ENCODE measurements at regions of chr3 and their contacts with region 1.

Region 1: DNA sequence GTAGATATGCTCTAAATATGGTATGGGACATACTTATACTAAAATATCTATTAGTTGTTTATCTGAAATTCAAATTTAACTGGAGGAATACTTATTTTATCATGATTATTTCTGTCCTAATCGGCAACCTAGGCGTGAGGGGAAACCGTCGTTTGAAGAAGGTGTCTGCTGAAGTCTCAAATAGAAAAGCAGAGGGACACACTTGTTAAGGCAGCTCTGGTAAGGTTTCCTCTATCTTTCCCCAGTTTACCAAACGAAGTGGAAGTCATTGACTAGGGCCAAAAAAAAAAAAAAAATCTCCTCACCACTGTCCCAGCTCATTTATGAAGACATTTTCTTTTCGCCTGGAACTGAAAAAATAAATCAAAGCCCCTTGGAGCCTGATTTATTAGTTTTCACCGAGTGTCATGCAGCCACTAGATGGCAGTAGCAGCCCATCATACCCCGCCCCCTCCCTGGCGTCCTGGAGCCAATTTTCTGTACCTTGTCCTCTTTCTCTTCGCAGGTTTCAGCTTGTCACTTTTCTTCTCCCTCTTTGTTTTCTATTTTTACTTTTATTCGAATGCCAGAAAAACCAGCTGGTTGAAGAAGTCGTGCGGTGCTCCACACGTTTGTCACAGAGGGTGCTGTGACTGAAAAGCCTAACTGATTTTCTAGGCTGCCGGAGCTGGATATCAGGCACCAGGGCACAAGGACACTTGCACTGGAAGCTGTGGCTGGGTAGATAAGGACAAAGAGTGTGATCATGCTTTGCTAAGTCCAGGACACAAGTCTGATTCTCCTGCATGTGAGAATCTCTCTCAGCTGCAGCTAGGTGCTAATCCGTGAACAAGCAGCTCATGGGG is 238.7 kb downstream of the ZPLD1 start:
- DNase-seq: peak; percentile 19
- ATAC-seq: no peak
- H3K4me3 Mint-ChIP-seq: no peak overlapping the region
- H3K27ac Mint-ChIP-seq: no peak overlapping the region
- H3K4me1 Mint-ChIP-seq: peaks cover 3% of the 10 kb centered on the region
- H3K27me3 Mint-ChIP-seq: peaks cover 12% of the 10 kb centered on the region
- CTCF ChIP-seq: peak; percentile 70

Region 2: GRCh38 chr3:101809178-101810021 is 864.1 kb before region 1 on chr3:
- CTCF ChIA-PET with region 1: no interaction called
- POLR2A ChIA-PET with region 1: no interaction called
- intact Hi-C with region 1: loop called (anchors 1 kb)
- DNase-seq: no peak
- ATAC-seq: peak; percentile 82
- H3K4me3 Mint-ChIP-seq: no peak overlapping the region
- H3K27ac Mint-ChIP-seq: no peak overlapping the region
- H3K4me1 Mint-ChIP-seq: peaks cover 37% of the 10 kb centered on the region
- H3K27me3 Mint-ChIP-seq: no peaks in the 10 kb centered on the region
- CTCF ChIP-seq: peak; percentile 59

Region 3: DNA sequence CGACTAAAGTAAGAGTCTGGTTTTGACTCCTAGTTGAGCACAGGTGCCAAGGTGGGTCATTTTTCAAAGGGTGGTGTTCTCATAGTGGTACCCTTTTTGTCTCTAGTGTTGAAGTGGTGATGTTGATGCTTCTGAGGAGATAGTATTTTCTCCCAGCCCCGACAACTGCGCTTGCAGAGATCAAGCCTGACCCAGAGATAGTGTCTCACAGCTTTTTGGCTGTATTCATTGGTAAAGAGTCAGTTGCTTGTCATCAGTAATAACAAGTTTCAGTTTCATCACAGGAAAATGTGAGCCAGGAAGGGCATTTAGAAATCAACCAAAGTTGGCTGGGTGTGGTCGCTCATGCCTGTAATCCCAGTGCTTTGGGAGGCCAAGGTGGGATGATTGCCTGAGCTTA is 684.9 kb before region 1 on chr3:
- CTCF ChIA-PET with region 1: no interaction called
- POLR2A ChIA-PET with region 1: no interaction called
- intact Hi-C with region 1: no loop called
- DNase-seq: no peak
- ATAC-seq: peak; percentile 36
- H3K4me3 Mint-ChIP-seq: no peak overlapping the region
- H3K27ac Mint-ChIP-seq: peak overlapping the region; percentile 75
- H3K4me1 Mint-ChIP-seq: peaks cover 52% of the 10 kb centered on the region
- H3K27me3 Mint-ChIP-seq: no peaks in the 10 kb centered on the region
- CTCF ChIP-seq: no peak

Region 4: DNA sequence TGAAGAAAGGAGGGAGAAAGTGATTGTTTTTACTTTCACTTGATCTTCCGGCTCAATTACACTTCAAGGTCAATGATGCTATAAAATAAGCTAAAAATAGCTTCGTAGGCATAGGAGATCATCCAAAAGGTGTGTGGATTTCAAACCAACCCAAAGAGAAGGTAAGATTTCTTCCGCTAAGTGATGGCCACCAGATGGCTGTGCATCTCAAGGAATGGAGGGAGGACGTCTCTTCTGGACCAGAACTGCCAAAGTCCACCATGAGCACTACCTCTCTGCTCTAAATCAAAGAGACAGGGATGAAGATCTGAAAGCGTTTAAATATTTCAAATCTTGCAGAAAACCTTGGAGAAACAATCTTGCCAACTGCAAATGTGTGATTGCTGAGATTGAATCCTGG is 437.8 kb before region 1 on chr3:
- CTCF ChIA-PET with region 1: interaction called, 3 read pairs
- POLR2A ChIA-PET with region 1: no interaction called
- intact Hi-C with region 1: loop called (anchors 2 kb)
- DNase-seq: no peak
- ATAC-seq: no peak
- H3K4me3 Mint-ChIP-seq: no peak overlapping the region
- H3K27ac Mint-ChIP-seq: no peak overlapping the region
- H3K4me1 Mint-ChIP-seq: peaks cover 46% of the 10 kb centered on the region
- H3K27me3 Mint-ChIP-seq: no peaks in the 10 kb centered on the region
- CTCF ChIP-seq: peak; percentile 51

Region 5: GRCh38 chr3:102471001-102471400 is 202.5 kb before region 1 on chr3:
- CTCF ChIA-PET with region 1: no interaction called
- POLR2A ChIA-PET with region 1: no interaction called
- intact Hi-C with region 1: no loop called
- DNase-seq: no peak
- ATAC-seq: no peak
- H3K4me3 Mint-ChIP-seq: no peak overlapping the region
- H3K27ac Mint-ChIP-seq: no peak overlapping the region
- H3K4me1 Mint-ChIP-seq: no peaks in the 10 kb centered on the region
- H3K27me3 Mint-ChIP-seq: peaks cover 2% of the 10 kb centered on the region
- CTCF ChIP-seq: no peak

Region 6: DNA sequence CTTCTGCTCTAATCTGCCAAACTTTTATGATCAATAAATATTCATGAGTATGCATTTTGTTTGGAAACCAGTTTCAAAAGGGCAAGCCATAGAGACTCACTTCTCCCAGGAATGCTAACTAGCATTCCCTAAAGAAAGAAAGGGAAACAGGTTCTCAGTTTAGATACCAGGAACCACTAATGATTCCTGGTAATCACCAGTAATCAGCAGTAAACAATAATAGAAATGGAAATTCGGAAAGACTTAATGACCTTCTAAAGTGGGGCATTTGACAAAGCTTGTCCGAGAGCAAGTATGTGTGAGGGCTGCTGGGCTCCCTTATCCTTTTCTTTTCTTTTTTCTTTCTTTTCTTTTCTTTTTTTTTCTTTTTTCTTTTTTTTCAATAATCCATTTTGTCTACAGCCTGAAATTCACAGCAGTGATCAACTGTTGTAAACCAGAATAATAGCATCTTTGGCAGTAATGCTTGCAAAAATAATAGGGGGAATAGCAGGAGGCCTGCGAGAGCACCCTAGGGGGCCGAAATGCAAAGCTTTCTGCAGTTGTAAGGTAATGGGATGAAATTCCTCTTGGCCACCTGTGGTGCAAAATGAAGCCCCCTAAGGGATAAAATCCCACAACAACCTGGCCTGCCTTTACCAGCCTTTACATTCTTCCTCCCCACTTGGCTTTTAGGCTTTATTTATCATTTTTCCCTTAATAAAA is 14.5 kb after region 1 on chr3:
- CTCF ChIA-PET with region 1: interaction called, 12 read pairs
- POLR2A ChIA-PET with region 1: no interaction called
- intact Hi-C with region 1: no loop called
- DNase-seq: no peak
- ATAC-seq: no peak
- H3K4me3 Mint-ChIP-seq: no peak overlapping the region
- H3K27ac Mint-ChIP-seq: no peak overlapping the region
- H3K4me1 Mint-ChIP-seq: no peaks in the 10 kb centered on the region
- H3K27me3 Mint-ChIP-seq: peaks cover 8% of the 10 kb centered on the region
- CTCF ChIP-seq: no peak

Measured in activated B cell treated with CpG ODN at 0.5 μM for 24 hours (primary cell).